Endothelial cell of umbilical vein (primary cell): ENCODE measurements at regions of chr20 and their contacts with region 1.

Region 1: GRCh38 chr20:53915446-53916172 is 154.8 kb downstream of the BCAS1 start:
- DNase-seq: peak; percentile 96
- H3K4me3 ChIP-seq: peak overlapping the region; percentile 47 to 81 (median 67)
- H3K27ac ChIP-seq: peak overlapping the region; percentile 82
- H3K4me1 ChIP-seq: peaks cover 30% of the 10 kb centered on the region
- H3K27me3 ChIP-seq: no peaks in the 10 kb centered on the region
- CTCF ChIP-seq: peak; percentile 76 to 88
- POLR2A ChIP-seq: no peak

Region 2: GRCh38 chr20:53547664-53548239 is 367.9 kb before region 1 on chr20:
- CTCF ChIA-PET with region 1: interaction called, 10 read pairs
- POLR2A ChIA-PET with region 1: no interaction called
- dilution Hi-C with region 1: no loop called
- intact Hi-C with region 1: no loop called
- DNase-seq: peak; percentile 68
- H3K4me3 ChIP-seq: no peak overlapping the region
- H3K27ac ChIP-seq: no peak overlapping the region
- H3K4me1 ChIP-seq: no peaks in the 10 kb centered on the region
- H3K27me3 ChIP-seq: no peaks in the 10 kb centered on the region
- CTCF ChIP-seq: peak; percentile 48 to 65
- POLR2A ChIP-seq: no peak

Region 3: DNA sequence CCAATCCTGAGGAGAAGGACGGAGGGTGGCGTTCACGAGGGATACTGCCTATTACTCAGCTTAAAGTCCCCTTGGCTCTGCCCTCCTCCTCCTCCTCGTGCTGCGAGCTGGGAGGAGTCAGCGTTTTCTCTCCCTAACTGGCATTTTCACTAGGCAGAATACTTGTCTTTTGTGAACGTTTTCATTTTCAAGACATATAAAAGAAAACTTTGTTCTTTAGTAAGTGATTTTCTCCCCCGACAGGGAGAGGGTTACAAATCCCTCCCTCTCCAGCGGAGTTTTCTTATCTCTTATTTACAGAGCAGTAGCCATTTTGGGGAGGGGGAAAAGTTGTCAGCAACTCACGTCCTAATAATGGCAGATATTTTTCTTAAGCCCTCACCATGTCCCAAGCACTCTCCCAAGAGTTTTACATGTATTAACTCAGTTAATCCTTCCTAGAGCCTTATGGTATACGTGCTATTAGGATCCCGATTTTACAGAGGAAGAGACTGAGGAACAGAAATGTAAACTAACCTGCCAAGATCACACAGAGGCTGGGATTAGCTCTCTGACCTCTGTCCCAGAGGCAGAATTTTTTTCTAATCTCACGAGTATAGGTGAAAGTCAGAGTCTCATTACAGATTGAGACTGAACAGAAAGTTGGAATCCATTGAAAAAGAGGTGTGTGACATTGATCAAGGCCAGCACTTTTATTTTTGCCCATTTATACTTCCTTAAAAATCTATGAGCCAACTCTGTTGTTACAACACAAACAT is 292.0 kb before region 1 on chr20:
- CTCF ChIA-PET with region 1: interaction called, 28 read pairs
- POLR2A ChIA-PET with region 1: no interaction called
- dilution Hi-C with region 1: no loop called
- intact Hi-C with region 1: loop called (anchors 1 kb)
- DNase-seq: peak; percentile 85
- H3K4me3 ChIP-seq: peak overlapping the region in 1 of 3 experiments; percentile 43
- H3K27ac ChIP-seq: peak overlapping the region; percentile 92
- H3K4me1 ChIP-seq: peaks cover 26% of the 10 kb centered on the region
- H3K27me3 ChIP-seq: no peaks in the 10 kb centered on the region
- CTCF ChIP-seq: no peak
- POLR2A ChIP-seq: no peak

Region 4: DNA sequence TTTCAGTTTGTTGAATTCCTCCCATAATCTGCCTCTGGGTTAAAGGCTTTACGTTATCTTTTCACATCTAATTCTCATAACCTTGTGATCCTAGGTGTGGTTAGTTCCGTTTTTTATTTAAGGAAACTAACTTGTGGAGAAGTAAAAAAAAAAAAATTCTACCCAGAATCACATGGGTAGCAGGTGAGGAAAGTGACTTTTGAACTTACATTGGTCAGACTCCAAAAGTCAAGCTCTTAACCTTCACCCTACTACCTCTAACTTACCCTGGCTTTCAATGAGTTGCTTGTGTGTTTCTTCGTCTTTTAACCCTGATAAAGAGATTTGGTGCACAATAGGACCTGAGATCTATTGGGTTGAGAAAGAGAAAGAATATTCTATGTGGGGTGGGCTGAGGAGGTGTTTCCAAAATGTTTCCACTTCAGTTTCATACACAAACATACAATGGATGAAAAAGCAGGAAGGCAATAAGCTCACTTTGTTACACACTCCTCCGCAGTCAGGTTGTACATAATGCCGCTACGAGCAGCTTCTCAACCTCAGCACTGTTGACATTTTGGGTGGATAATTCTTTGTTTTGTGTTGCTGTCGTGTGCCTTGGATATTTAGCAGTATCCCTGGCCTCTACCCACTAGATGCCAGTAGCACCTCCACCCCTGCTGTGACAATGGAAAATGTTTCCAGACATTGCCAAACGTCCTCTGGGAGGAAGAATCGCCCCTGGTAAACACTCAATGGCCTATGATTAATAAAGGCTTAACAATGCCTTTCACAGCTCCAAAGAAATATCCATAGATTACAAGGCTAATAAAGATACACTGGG is 129.0 kb before region 1 on chr20:
- CTCF ChIA-PET with region 1: interaction called, 10 read pairs
- POLR2A ChIA-PET with region 1: no interaction called
- dilution Hi-C with region 1: no loop called
- intact Hi-C with region 1: loop called (anchors 1 kb)
- DNase-seq: peak; percentile 70
- H3K4me3 ChIP-seq: no peak overlapping the region
- H3K27ac ChIP-seq: no peak overlapping the region
- H3K4me1 ChIP-seq: peaks cover 24% of the 10 kb centered on the region
- H3K27me3 ChIP-seq: no peaks in the 10 kb centered on the region
- CTCF ChIP-seq: peak in 1 of 2 donors; percentile 6
- POLR2A ChIP-seq: no peak

Region 5: GRCh38 chr20:53852019-53852418 is 63.6 kb before region 1 on chr20:
- CTCF ChIA-PET with region 1: no interaction called
- POLR2A ChIA-PET with region 1: no interaction called
- dilution Hi-C with region 1: no loop called
- intact Hi-C with region 1: no loop called
- DNase-seq: no peak
- H3K4me3 ChIP-seq: no peak overlapping the region
- H3K27ac ChIP-seq: no peak overlapping the region
- H3K4me1 ChIP-seq: no peaks in the 10 kb centered on the region
- H3K27me3 ChIP-seq: no peaks in the 10 kb centered on the region
- CTCF ChIP-seq: no peak
- POLR2A ChIP-seq: no peak

Region 6: DNA sequence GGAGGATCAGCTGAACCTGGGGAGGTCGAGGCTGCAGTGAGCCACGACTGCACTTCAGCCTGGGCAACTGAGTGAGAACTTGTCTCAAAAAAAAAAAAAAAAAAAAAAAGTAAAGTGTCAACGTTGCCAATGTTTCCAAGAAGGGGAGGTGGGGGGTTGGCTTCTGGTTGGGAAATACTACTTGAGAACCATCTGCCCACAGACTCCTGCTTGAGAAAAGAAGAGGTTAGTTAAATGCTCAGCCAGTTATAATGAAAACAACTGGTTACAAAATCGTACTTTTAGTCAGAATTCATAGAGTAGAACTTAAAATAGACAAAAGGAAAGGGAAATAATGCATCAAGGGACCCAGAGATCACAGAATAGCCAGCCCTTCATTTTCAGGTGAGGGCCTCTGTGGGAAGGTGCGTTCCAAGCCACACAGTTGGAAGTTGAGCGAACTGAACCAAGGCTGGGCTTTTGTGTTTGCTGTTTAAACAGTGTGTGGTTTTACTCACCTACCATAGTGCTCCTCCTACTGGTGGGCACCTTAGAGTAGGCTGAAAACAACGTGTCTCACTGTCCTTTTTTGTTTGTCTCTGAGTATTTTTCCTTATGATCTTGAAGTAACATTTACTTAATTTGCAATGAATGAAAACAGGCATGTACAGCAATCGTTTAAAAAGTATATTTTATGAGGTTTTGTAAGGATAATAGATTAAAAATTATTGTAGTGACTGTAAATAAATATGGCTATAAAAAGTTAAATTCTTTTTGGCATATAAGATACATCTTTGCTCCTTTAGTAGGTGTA is 45.9 kb before region 1 on chr20:
- CTCF ChIA-PET with region 1: interaction called, 27 read pairs
- POLR2A ChIA-PET with region 1: no interaction called
- dilution Hi-C with region 1: no loop called
- intact Hi-C with region 1: loop called (anchors 1 kb)
- DNase-seq: peak; percentile 82
- H3K4me3 ChIP-seq: no peak overlapping the region
- H3K27ac ChIP-seq: no peak overlapping the region
- H3K4me1 ChIP-seq: peaks cover 22% of the 10 kb centered on the region
- H3K27me3 ChIP-seq: no peaks in the 10 kb centered on the region
- CTCF ChIP-seq: peak; percentile 74 to 77
- POLR2A ChIP-seq: no peak

Region 7: DNA sequence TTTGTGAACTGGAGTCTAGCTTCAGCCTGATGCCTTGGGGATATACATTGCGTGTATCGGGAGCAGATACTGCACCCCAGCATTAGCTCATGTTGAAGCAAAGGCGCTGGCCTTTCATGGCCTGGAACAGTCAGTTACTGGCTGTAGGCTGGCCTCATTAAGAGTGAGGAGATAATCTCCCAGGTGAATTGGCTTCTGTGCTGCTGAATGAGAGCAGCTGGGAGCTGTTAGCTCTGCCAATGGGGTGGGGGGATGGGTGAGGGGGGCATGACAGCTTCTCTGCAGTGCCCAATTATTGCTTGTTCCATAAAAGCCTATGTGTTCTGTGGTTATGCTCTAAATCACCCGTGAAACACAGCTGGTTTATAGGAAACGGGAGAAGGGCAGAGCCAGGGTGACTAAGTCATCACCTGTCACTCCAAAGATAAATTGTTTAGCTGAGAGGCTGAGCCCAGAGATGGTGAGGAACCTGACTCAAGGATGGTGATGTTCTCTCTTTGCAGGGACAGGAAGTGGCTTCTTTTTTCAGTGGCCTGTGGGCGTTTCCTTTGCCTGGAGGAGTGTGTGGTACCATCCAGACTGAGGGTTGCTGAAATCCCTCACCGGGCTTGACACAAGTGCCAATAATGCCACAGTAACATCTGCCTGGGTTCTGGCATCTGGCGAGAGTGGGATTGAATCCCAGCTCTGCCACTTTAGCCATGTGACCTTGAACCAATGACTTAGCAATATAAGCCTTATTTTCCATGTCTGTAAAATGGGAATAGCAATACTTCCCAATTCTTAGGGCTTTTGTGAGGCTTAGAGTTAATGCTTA is 16.1 kb before region 1 on chr20:
- CTCF ChIA-PET with region 1: interaction called, 73 read pairs
- POLR2A ChIA-PET with region 1: interaction called, 10 read pairs
- dilution Hi-C with region 1: no loop called
- intact Hi-C with region 1: loop called (anchors 1 kb)
- DNase-seq: peak; percentile 47
- H3K4me3 ChIP-seq: no peak overlapping the region
- H3K27ac ChIP-seq: peak overlapping the region; percentile 97
- H3K4me1 ChIP-seq: peaks cover 50% of the 10 kb centered on the region
- H3K27me3 ChIP-seq: no peaks in the 10 kb centered on the region
- CTCF ChIP-seq: no peak
- POLR2A ChIP-seq: no peak

Region 8: DNA sequence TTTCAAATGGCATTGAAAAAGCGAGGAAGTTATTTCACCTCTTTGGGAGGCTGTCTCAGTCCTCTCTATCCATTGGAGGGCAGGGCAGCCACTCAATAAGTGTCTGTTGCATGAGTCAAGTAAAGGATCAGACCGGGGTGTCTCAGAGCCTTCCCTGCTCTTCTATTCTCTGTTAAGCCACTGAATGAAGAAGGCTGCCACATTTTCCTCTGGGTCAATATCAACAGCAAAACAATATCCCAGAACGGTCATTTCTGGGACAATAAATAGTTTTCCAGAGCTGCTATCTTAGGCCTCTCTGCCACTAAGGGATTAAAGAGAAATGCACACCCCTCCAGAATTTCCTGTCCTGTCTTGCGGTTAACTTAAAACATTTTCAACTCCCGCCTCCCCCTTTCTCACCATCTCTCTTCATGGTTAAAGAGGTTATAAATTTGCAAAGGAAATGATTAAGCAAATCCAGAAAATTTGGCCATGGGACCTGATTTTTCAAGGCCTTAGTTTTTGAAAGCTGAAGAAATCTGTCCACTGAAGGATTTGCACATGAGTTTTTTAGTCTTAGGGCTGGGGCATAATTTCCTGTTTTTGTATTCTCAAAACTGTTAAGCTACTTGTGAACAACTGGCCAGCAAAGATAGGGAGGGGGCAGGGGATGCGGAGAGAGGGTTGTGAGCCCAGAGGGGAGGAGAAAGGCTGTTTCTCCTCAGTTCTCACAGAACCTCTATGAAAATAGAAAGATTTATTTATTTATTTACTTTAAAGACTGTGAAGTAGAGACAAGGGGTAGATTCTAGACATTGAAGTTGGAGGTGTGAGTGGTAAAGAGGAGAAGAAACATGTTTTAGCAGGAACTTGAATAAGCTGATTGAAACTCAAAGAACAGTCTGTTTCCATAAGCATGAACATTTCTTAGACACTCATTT is 19.1 kb after region 1 on chr20:
- CTCF ChIA-PET with region 1: interaction called, 98 read pairs
- POLR2A ChIA-PET with region 1: interaction called, 6 read pairs
- dilution Hi-C with region 1: no loop called
- intact Hi-C with region 1: loop called (anchors 1 kb)
- DNase-seq: peak; percentile 93
- H3K4me3 ChIP-seq: no peak overlapping the region
- H3K27ac ChIP-seq: peak overlapping the region; percentile 78
- H3K4me1 ChIP-seq: peaks cover 25% of the 10 kb centered on the region
- H3K27me3 ChIP-seq: no peaks in the 10 kb centered on the region
- CTCF ChIP-seq: no peak
- POLR2A ChIP-seq: no peak